ENCODE measurements at regions of chr11 and their contacts with region 1.

Region 1: GRCh38 chr11:63945477-63946163 is 6.8 kb downstream of the NAA40 start:
- DNase-seq: peak; percentile 68
- ATAC-seq: peak; percentile 95
- H3K4me3 Mint-ChIP-seq: no peak overlapping the region
- H3K27ac Mint-ChIP-seq: peak overlapping the region; percentile 80
- H3K4me1 Mint-ChIP-seq: peaks cover 4% of the 10 kb centered on the region; the same call in 1 of the 2 replicates
- H3K27me3 Mint-ChIP-seq: no peaks in the 10 kb centered on the region
- CTCF ChIP-seq: peak; percentile 41

Region 2: GRCh38 chr11:63829823-63830489 is 115.7 kb before region 1 on chr11:
- CTCF ChIA-PET with region 1: interaction called, 16 read pairs
- POLR2A ChIA-PET with region 1: no interaction called
- DNase-seq: peak; percentile 62
- ATAC-seq: peak; percentile 87
- H3K4me3 Mint-ChIP-seq: no peak overlapping the region
- H3K27ac Mint-ChIP-seq: peak overlapping the region; percentile 47; the same call in 1 of the 2 replicates
- H3K4me1 Mint-ChIP-seq: peaks cover 30% of the 10 kb centered on the region
- H3K27me3 Mint-ChIP-seq: no peaks in the 10 kb centered on the region; the same call in 1 of the 2 replicates
- CTCF ChIP-seq: no peak

Region 3: GRCh38 chr11:63906585-63906984 is 39.0 kb before region 1 on chr11:
- CTCF ChIA-PET with region 1: interaction called, 17 read pairs
- POLR2A ChIA-PET with region 1: interaction called, 3 read pairs
- DNase-seq: peak; percentile 62
- ATAC-seq: no peak
- H3K4me3 Mint-ChIP-seq: no peak overlapping the region
- H3K27ac Mint-ChIP-seq: peak overlapping the region; percentile 93
- H3K4me1 Mint-ChIP-seq: peaks cover 48% of the 10 kb centered on the region
- H3K27me3 Mint-ChIP-seq: no peaks in the 10 kb centered on the region
- CTCF ChIP-seq: peak; percentile 35; the same call in 1 of the 2 replicates

Region 4: GRCh38 chr11:63961608-63962412 is 16.2 kb after region 1 on chr11:
- CTCF ChIA-PET with region 1: interaction called, 17 read pairs
- POLR2A ChIA-PET with region 1: interaction called, 5 read pairs
- DNase-seq: no peak
- ATAC-seq: peak; percentile 54
- H3K4me3 Mint-ChIP-seq: no peak overlapping the region
- H3K27ac Mint-ChIP-seq: no peak overlapping the region
- H3K4me1 Mint-ChIP-seq: peaks cover 4% of the 10 kb centered on the region; the same call in 1 of the 2 replicates
- H3K27me3 Mint-ChIP-seq: peaks cover 24% of the 10 kb centered on the region
- CTCF ChIP-seq: no peak